ENCODE measurements at regions of chr3 and their contacts with region 1.

Region 1: DNA sequence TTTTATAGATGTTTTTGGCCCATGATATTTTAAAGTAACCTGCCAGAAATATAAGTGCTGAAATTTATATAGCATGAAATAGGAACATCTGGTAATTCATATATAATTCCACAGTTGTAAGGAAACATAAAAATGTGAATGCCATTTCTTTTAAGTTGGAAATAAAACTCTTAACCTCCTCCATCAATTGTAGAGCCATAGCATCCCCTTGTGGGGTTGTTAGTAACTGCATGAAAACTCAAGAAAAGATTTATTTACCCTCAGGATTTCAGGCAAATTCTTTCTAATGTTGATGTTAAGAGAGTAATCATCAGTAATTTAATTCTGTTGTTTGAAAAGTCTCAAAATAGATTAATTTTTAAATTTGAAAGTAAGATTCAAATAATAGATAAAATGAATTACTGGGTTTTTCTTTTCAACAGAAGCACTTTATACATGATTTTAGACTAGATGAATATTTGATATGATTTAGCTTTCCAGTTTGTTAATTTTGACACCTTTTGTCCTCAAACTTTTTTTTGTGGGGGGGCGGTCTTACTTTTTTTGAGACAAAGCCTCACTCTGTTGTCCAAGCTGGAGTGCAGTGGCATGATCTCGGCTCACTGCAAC is 74.7 kb downstream of the RASA2 start:
- DNase-seq: peak in 2 of 5 donors; percentile 22 to 24
- ATAC-seq: peak in 1 of 4 donors; percentile 41
- H3K4me3 ChIP-seq: no peak overlapping the region
- H3K27ac ChIP-seq: no peak overlapping the region
- H3K4me1 ChIP-seq: peaks cover 0 to 18% (median 0%) of the 10 kb centered on the region in 12 donors
- H3K27me3 ChIP-seq: no peaks in the 10 kb centered on the region
- CTCF ChIP-seq: peak; percentile 89 to 100 (median 96)
- POLR2A ChIP-seq: no peak

Region 2: DNA sequence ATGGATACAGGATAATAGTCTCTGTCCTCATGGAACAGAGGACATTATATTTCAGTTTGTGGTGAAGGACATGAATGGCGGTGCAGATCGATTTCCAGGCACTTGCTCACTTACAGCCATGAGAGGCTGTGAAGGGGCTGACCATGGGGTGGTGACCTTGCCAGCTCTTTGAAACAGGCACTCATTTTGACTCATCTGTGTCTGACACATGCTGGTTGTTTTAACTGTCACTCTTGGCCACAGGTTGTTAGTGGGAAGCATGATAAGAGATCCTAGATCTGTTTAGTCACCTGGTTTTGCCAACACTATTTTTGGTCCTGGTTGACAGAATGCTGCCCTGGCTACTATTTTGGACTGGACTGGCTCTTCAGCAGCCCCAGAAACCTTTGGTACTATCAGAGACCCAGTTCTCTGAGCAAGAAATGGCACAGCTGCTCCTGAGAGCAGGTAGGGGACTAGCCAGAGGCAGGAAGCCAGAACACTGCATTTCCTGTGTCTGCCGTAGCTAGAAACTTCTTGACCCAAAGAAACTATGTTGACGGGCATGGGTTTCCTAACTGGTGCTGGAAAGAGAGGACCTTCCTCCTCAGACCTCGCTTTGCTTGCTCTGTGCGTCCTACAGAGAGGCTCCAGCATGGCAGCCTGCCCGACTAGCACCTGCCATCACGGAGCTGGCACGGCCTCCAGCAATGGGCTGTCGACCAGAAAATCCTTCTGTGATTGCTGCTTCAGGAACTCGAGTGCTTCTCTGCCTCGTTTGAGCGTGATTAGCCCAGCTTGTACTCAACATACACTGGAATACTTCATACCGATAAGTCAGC is 323.6 kb before region 1 on chr3:
- intact Hi-C with region 1: no loop called
- DNase-seq: peak; percentile 68 to 90 (median 85)
- ATAC-seq: peak; percentile 43 to 62 (median 52)
- H3K4me3 ChIP-seq: peak overlapping the region in 1 of 12 donors; percentile 5
- H3K27ac ChIP-seq: peak overlapping the region; percentile 67 to 92 (median 80)
- H3K4me1 ChIP-seq: peaks cover 0 to 75% (median 54%) of the 10 kb centered on the region in 12 donors
- H3K27me3 ChIP-seq: no peaks in the 10 kb centered on the region
- CTCF ChIP-seq: no peak
- POLR2A ChIP-seq: no peak

Region 3: DNA sequence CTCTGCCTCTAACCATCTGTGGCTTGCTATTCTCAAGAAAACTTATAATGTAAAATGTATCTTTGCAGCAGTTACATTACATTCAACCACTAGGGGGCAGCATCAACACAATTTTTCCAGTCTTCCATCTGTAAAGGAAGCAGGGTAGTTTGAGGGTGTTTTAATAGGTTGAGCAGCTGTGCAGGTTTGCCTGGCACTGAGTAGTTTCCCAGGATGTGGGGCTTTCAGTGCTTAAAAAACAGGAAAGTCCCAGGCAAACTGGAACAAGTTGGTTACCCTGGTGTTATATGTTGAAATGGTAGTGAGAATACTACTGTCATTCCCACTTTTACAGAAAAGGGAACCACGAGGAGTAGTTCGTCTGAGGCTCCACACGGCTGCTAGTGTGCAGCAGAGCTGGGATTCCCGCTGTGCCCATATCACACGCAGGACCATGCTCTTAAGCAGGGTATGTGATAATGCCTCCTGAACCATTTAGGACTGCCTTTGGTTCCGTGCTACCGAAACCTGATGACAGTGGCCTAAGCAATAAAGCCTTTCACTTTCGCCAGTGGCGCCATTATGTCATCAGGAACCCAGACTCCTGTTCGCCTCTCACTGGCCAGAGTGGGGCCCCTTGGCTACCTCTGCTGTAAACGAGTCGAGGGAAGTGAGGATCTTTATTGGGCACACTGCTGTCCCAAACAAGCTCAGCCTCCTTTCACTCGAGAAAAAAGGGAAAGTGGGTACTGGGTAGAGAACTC is 257.9 kb before region 1 on chr3:
- intact Hi-C with region 1: loop called in 6 of 10 experiments (anchors 2 to 10 kb)
- DNase-seq: peak in 2 of 5 donors; percentile 48 to 58
- ATAC-seq: peak; percentile 59 to 76 (median 68)
- H3K4me3 ChIP-seq: no peak overlapping the region
- H3K27ac ChIP-seq: peak overlapping the region in 2 of 12 donors; percentile 4 to 13
- H3K4me1 ChIP-seq: peaks cover 0 to 25% (median 3%) of the 10 kb centered on the region in 12 donors
- H3K27me3 ChIP-seq: no peaks in the 10 kb centered on the region
- CTCF ChIP-seq: peak; percentile 71 to 97 (median 82)
- POLR2A ChIP-seq: no peak

Region 4: DNA sequence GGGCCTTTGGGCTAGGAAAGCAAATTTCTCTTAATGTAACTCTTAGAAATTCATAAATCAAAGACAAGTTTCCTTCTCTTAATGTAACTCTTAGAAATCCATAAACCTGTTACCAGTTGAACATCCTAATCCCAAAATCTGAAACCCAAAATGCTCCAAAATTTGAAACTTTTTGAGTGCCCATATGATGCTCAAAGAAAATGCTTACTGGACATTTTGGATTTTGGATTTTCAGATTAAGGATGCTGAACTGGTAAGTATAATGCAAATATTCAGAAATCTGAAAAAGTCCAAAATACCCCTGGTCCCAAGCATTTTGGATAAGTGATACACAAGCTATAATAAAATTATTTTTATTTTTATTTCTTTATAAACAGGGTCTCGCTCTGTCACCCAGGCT is 244.7 kb before region 1 on chr3:
- intact Hi-C with region 1: loop called in 4 of 10 experiments (anchors 5 to 10 kb)
- DNase-seq: no peak
- ATAC-seq: no peak
- H3K4me3 ChIP-seq: no peak overlapping the region
- H3K27ac ChIP-seq: no peak overlapping the region
- H3K4me1 ChIP-seq: peaks cover 0 to 22% (median 7%) of the 10 kb centered on the region in 12 donors
- H3K27me3 ChIP-seq: no peaks in the 10 kb centered on the region
- CTCF ChIP-seq: no peak
- POLR2A ChIP-seq: no peak

Region 5: DNA sequence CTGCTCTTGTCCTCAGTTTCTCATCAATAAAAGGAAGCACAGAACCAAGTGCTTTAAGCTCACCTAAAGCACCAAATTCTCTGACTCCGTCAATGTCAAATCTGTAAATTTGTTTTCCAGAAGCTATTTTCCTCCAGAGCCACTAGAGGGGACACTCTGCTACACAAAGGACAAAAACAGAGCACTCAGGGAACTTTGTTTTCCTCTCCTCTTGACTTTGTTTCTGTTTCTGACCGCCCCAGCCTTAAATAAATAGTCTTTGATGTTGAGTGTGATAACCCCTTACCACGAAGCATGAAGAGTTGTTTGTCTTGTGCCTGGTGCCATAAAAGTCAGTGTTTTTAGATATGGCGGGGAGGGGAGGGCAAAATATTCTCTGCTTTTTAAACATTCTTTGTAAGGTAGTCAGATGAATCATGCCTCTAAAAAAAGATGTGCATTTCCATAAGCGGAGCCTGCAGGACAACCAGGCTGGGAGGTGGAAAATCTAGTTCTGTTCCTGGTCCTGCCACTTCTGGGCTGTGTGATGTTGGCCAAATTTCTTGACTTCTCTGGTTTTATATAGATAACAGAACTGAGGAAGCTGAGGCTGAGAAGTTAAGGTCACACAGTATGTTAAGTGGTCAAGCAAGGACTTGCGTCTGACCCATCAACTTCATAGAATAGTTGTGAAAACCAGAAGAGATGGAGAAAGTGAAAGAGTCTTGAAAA is 200.5 kb before region 1 on chr3:
- intact Hi-C with region 1: loop called in 6 of 10 experiments (anchors 5 to 10 kb)
- DNase-seq: peak in 1 of 5 donors; percentile 23
- ATAC-seq: peak; percentile 72 to 88 (median 82)
- H3K4me3 ChIP-seq: peak overlapping the region in 6 of 12 donors; percentile 6 to 33 (median 26)
- H3K27ac ChIP-seq: peak overlapping the region in 10 of 12 donors; percentile 10 to 60 (median 44)
- H3K4me1 ChIP-seq: peaks cover 0 to 12% (median 4%) of the 10 kb centered on the region in 12 donors
- H3K27me3 ChIP-seq: no peaks in the 10 kb centered on the region
- CTCF ChIP-seq: peak; percentile 63 to 92 (median 84)
- POLR2A ChIP-seq: no peak

Region 6: DNA sequence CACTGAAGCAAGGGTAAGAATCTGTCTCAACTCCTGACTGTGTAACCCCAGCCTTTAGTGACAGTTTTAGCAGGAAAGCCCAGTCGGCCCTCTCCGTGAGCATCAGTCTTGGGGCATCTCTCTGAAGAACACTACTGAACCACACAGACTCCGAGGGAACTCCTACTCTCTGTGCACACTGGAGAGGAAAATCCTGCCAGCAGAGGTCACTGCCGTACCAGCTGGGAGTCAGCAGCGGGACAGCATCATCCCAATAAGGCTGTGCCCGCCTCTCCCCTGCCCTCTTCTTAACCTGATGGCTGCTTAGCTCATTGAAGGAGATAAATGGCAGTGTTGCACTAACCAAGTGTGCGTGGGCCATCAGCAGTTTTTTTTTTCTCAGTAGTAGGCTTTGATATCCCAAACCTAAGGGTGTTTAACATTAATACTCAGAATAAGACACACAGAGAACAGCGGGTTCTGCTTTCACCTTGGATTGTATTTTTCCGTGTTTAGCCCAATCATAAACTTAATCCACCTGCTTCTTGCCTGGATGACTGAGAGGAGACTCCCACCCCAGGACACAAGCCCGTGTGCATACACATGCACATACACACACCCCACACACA is 101.3 kb before region 1 on chr3:
- intact Hi-C with region 1: loop called (anchors 1 to 5 kb)
- DNase-seq: peak; percentile 85 to 91 (median 89)
- ATAC-seq: peak; percentile 89 to 98 (median 97)
- H3K4me3 ChIP-seq: no peak overlapping the region
- H3K27ac ChIP-seq: no peak overlapping the region
- H3K4me1 ChIP-seq: peaks cover 0 to 12% (median under 1%) of the 10 kb centered on the region in 12 donors
- H3K27me3 ChIP-seq: no peaks in the 10 kb centered on the region
- CTCF ChIP-seq: peak; percentile 77 to 92 (median 87)
- POLR2A ChIP-seq: no peak

Region 7: DNA sequence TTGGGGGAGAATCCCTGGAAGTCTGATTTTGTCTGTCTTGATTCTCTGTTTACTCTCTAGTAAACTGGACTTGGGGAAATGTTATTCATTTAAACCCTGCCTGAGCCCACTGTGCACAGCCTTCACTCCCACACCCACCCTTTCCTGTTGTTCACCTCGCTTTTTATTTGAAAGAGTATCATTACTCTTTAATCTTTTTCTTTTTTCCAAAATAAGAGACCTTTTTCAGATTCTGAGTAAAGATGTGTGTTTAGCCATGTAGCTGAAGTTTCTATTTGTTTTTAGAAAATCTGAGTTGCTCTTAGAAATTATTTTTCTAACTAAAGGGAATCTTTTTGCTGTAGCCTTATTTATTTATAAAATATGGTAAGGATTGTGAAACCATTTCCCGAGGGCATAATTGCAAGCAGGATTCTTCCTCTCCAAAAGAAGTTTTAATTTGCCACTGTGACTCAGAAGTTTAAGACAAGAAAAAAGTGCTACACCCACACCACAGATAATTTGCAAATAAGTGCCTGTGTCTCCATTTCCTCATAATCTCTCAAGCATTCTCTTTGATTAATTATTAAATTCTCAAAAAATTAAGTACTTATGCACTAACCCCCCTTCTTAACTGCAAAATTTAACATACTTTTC is 31.3 kb before region 1 on chr3:
- intact Hi-C with region 1: no loop called
- DNase-seq: no peak
- ATAC-seq: peak in 2 of 4 donors; percentile 44 to 68
- H3K4me3 ChIP-seq: peak overlapping the region in 3 of 12 donors; percentile 4 to 17 (median 6)
- H3K27ac ChIP-seq: peak overlapping the region in 11 of 12 donors; percentile 12 to 86 (median 43)
- H3K4me1 ChIP-seq: peaks cover 0 to 54% (median 11%) of the 10 kb centered on the region in 12 donors
- H3K27me3 ChIP-seq: no peaks in the 10 kb centered on the region
- CTCF ChIP-seq: no peak
- POLR2A ChIP-seq: no peak